ENCODE measurements at regions of chr17 and their contacts with region 1.

Region 1: GRCh38 chr17:66287911-66288310 is 14.5 kb upstream of the PRKCA start:
- DNase-seq: no peak
- ATAC-seq: no peak
- H3K4me3 ChIP-seq: no peak overlapping the region
- H3K27ac ChIP-seq: no peak overlapping the region
- H3K4me1 ChIP-seq: no peaks in the 10 kb centered on the region
- H3K27me3 ChIP-seq: no peaks in the 10 kb centered on the region
- CTCF ChIP-seq: no peak

Region 2: GRCh38 chr17:65103896-65104295 is 1184.0 kb before region 1 on chr17:
- CTCF ChIA-PET with region 1: no interaction called
- POLR2A ChIA-PET with region 1: interaction called, 18 read pairs
- in situ Hi-C with region 1: no loop called
- intact Hi-C with region 1: no loop called
- DNase-seq: no peak
- ATAC-seq: no peak
- H3K4me3 ChIP-seq: no peak overlapping the region
- H3K27ac ChIP-seq: no peak overlapping the region
- H3K4me1 ChIP-seq: no peaks in the 10 kb centered on the region
- H3K27me3 ChIP-seq: no peaks in the 10 kb centered on the region
- CTCF ChIP-seq: no peak